ENCODE measurements at regions of chr16 and their contacts with region 1.

Region 1: GRCh38 chr16:58000706-58001676 is at the start of gene USB1:
- DNase-seq: peak; percentile 63 to 92 (median 80)
- ATAC-seq: peak; percentile 73
- H3K4me3 ChIP-seq: peak within 1 kb of the TSS; percentile 96
- H3K4me3 Mint-ChIP-seq: peak within 1 kb of the TSS; percentile 92
- H3K27ac ChIP-seq: peak within 1 kb of the TSS; percentile 79 to 86
- H3K27ac Mint-ChIP-seq: peak within 1 kb of the TSS; percentile 87
- H3K4me1 ChIP-seq: peaks cover 59% of the 10 kb centered on the region
- H3K4me1 Mint-ChIP-seq: peaks cover 57% of the 10 kb centered on the region
- H3K27me3 ChIP-seq: no peaks in the 10 kb centered on the region
- H3K27me3 Mint-ChIP-seq: no peaks in the 10 kb centered on the region
- CTCF ChIP-seq: peak; percentile 68
- total RNA-seq, gene USB1: 22.4 to 25.7 TPM

Region 2: GRCh38 chr16:57648590-57649442 is 352.2 kb before region 1 on chr16:
- CTCF ChIA-PET with region 1: no interaction called
- POLR2A ChIA-PET with region 1: no interaction called
- intact Hi-C with region 1: loop called in 1 of 2 experiments (anchors 10 kb)
- DNase-seq: peak; percentile 68 to 89 (median 82)
- ATAC-seq: peak; percentile 92
- H3K4me3 ChIP-seq: no peak overlapping the region
- H3K4me3 Mint-ChIP-seq: no peak overlapping the region
- H3K27ac ChIP-seq: no peak overlapping the region
- H3K27ac Mint-ChIP-seq: no peak overlapping the region
- H3K4me1 ChIP-seq: peaks cover 50% of the 10 kb centered on the region
- H3K4me1 Mint-ChIP-seq: peaks cover 27% of the 10 kb centered on the region
- H3K27me3 ChIP-seq: no peaks in the 10 kb centered on the region
- H3K27me3 Mint-ChIP-seq: no peaks in the 10 kb centered on the region
- CTCF ChIP-seq: peak; percentile 100

Region 3: DNA sequence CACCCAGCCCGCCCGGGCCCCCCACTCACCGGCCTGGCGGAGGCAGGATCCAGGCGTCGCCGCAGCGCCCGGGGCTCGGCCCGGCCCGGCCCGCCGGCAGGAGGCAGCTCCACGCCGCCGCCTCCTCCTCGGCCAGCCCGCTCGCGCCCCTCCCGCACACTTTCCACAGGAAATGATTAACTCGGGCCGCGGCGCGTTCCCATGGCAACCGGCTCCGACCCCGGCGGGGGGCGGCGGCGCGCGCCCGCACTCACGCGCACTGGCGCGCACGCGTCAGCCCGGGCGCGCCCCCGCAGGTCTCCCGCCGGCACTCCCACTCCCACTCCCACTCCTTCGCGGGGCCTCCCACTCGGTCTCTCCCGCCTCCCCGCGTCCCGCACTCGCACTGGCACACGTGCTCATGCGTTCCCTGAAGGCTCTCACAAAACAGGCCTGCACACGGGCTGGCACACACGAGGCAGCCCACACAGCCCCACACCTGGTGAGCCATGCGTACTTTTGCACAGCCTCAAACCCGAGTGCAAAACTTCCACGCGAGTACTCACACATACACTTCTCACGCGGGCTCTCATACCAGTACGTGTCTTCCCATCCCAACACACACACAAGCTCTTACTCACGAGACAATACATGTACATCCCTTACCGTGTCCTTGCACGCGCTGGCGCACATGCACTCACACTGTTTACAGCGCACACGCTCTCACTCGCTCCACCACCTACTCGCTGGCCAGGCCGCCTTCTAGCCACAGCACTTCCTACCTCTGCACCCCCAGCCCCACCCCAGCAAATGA is 198.5 kb before region 1 on chr16 and contains the start of gene KIFC3:
- CTCF ChIA-PET with region 1: no interaction called
- POLR2A ChIA-PET with region 1: no interaction called
- intact Hi-C with region 1: loop called in 1 of 2 experiments (anchors 5 kb)
- DNase-seq: peak; percentile 15 to 82 (median 56)
- ATAC-seq: peak; percentile 61
- H3K4me3 ChIP-seq: peak within 1 kb of the TSS; percentile 37
- H3K4me3 Mint-ChIP-seq: peak within 1 kb of the TSS; percentile 86
- H3K27ac ChIP-seq: no peak within 1 kb of the TSS
- H3K27ac Mint-ChIP-seq: no peak within 1 kb of the TSS
- H3K4me1 ChIP-seq: peaks cover 36% of the 10 kb centered on the region
- H3K4me1 Mint-ChIP-seq: peaks cover 37% of the 10 kb centered on the region
- H3K27me3 ChIP-seq: peaks cover 10 to 16% of the 10 kb centered on the region in 2 experiments
- H3K27me3 Mint-ChIP-seq: peaks cover 38% of the 10 kb centered on the region
- CTCF ChIP-seq: no peak
- total RNA-seq, gene KIFC3: not detected

Region 4: GRCh38 chr16:57984331-57985203 is 16.4 kb before region 1 on chr16:
- CTCF ChIA-PET with region 1: interaction called, 5 read pairs
- POLR2A ChIA-PET with region 1: interaction called, 34 read pairs
- intact Hi-C with region 1: loop called (anchors 1 kb)
- DNase-seq: peak; percentile 85 to 97 (median 92)
- ATAC-seq: peak; percentile 98
- H3K4me3 ChIP-seq: peak overlapping the region; percentile 81
- H3K4me3 Mint-ChIP-seq: peak overlapping the region; percentile 94
- H3K27ac ChIP-seq: peak overlapping the region; percentile 29 to 50
- H3K27ac Mint-ChIP-seq: peak overlapping the region; percentile 56
- H3K4me1 ChIP-seq: peaks cover 22% of the 10 kb centered on the region
- H3K4me1 Mint-ChIP-seq: peaks cover 15% of the 10 kb centered on the region
- H3K27me3 ChIP-seq: no peaks in the 10 kb centered on the region
- H3K27me3 Mint-ChIP-seq: no peaks in the 10 kb centered on the region
- CTCF ChIP-seq: no peak

Region 5: GRCh38 chr16:58129097-58129936 is 128.3 kb after region 1 on chr16 and contains the start of gene CFAP20:
- CTCF ChIA-PET with region 1: interaction called, 3 read pairs
- POLR2A ChIA-PET with region 1: interaction called, 8 read pairs
- intact Hi-C with region 1: loop called in 1 of 2 experiments (anchors 5 kb)
- DNase-seq: peak; percentile 92 to 98 (median 96)
- ATAC-seq: peak; percentile 84
- H3K4me3 ChIP-seq: peak within 1 kb of the TSS; percentile 99
- H3K4me3 Mint-ChIP-seq: peak within 1 kb of the TSS; percentile 91
- H3K27ac ChIP-seq: peak within 1 kb of the TSS; percentile 84 to 88
- H3K27ac Mint-ChIP-seq: peak within 1 kb of the TSS; percentile 88
- H3K4me1 ChIP-seq: peaks cover 40% of the 10 kb centered on the region
- H3K4me1 Mint-ChIP-seq: peaks cover 47% of the 10 kb centered on the region
- H3K27me3 ChIP-seq: no peaks in the 10 kb centered on the region
- H3K27me3 Mint-ChIP-seq: no peaks in the 10 kb centered on the region
- CTCF ChIP-seq: no peak
- total RNA-seq, gene CFAP20: 250 to 261 TPM

Measured in CD4-positive, alpha-beta T cell (primary cell).